ENCODE measurements at regions of chr5 and their contacts with region 1.

Region 1: GRCh38 chr5:76641514-76642120 is 18.4 kb upstream of the F2RL2 start:
- DNase-seq: peak in 1 of 2 experiments; percentile 76
- H3K4me3 ChIP-seq: no peak overlapping the region
- H3K27ac ChIP-seq: no peak overlapping the region
- H3K4me1 ChIP-seq: 0 out of 7 replicates have a peak, but pooled peaks cover 0 to 4% (median 0%) of the 10 kb centered on the region in 4 experiments
- H3K27me3 ChIP-seq: no peaks in the 10 kb centered on the region
- CTCF ChIP-seq: peak in 2 of 3 experiments; percentile 75 to 85; a peak in 3 of 4 replicates
- EP300 ChIP-seq: no peak
- POLR2A ChIP-seq: no peak
- RAD21 ChIP-seq: peak; percentile 92

Region 2: DNA sequence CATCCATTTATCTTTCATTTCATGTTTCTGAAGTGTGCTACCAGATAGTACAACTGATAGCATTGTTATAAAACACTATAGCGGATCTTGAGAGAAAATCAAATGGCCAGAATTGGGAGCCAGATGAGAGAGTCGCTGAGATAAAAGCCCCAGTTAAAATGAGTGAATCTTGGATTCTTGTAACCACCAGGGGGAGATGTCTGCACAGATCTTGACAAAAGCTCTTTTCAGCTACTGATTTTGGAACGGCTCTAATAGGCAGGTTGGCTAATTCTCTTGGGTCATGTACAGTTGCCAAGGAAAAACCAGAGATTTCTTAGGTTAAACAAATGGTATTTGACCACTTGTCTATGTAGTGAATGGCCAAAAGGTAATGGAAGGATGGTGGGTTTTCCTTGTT is 40.1 kb before region 1 on chr5:
- CTCF ChIA-PET with region 1: interaction called, 72 read pairs
- POLR2A ChIA-PET with region 1: no interaction called
- DNase-seq: no peak
- H3K4me3 ChIP-seq: no peak overlapping the region
- H3K27ac ChIP-seq: no peak overlapping the region
- H3K4me1 ChIP-seq: no peaks in the 10 kb centered on the region
- H3K27me3 ChIP-seq: no peaks in the 10 kb centered on the region
- CTCF ChIP-seq: peak in 2 of 3 experiments; percentile 63 to 79; a peak in 3 of 4 replicates
- EP300 ChIP-seq: no peak
- POLR2A ChIP-seq: no peak
- RAD21 ChIP-seq: peak; percentile 78 to 88

Region 3: DNA sequence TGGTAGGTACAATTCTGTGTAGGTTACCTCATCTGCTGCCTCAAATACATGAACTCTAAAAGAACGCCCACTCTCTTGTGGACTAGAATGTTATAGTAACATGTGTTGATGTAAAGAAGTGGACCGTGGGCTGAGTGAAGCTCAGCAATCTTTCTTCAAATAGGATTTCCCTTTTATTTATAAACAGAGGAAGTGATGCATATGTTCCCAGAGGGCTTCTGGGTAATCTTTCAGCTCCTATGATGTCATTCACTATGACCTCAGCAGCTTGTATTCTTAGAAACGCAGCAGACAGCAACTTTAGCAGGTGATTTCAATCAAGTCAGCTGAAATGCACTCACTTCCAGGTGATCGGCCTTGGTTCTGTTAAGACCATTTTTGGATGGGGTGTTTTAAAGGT is 32.8 kb before region 1 on chr5:
- CTCF ChIA-PET with region 1: interaction called, 11 read pairs
- POLR2A ChIA-PET with region 1: interaction called, 3 read pairs
- DNase-seq: no peak
- H3K4me3 ChIP-seq: no peak overlapping the region
- H3K27ac ChIP-seq: no peak overlapping the region
- H3K4me1 ChIP-seq: peaks cover 0 to 4% (median 2%) of the 10 kb centered on the region in 4 experiments; a peak in 3 of 7 replicates
- H3K27me3 ChIP-seq: no peaks in the 10 kb centered on the region
- CTCF ChIP-seq: no peak
- EP300 ChIP-seq: no peak
- POLR2A ChIP-seq: no peak
- RAD21 ChIP-seq: no peak

Region 4: DNA sequence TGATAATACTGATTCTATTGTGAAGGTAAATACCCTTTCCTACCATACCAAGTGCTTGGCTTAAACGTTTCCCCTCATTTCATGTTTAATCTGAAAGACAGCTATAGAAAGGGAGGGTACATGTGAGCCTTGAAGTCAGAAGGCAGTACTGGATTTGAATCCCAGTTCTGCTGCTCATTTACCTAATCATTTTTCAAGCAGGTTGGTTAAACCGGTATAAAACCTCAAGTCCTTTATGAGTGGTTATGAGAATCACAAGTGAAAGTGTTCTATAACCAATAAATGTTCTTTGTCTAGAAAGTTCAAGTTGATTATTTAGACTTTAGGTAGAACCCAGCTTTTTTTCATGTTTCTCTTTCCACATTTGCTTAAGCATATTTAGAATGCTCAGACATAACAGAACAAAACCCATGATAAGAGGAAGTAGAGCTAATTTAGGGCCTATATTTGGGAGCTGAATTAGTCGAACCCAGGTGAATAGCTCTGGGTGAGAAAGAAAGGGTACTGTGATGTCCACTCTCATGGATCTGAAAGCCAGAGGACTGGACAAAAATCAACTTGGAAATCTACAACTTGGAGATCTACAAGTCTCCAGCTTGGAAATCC is 11.3 kb after region 1 on chr5:
- CTCF ChIA-PET with region 1: interaction called, 11 read pairs
- POLR2A ChIA-PET with region 1: interaction called, 3 read pairs
- DNase-seq: no peak
- H3K4me3 ChIP-seq: no peak overlapping the region
- H3K27ac ChIP-seq: no peak overlapping the region
- H3K4me1 ChIP-seq: no peaks in the 10 kb centered on the region
- H3K27me3 ChIP-seq: no peaks in the 10 kb centered on the region
- CTCF ChIP-seq: no peak
- EP300 ChIP-seq: no peak
- POLR2A ChIP-seq: no peak
- RAD21 ChIP-seq: no peak

Measured in H1 (cell line).